Heart left ventricle (tissue), 16 donors: ENCODE measurements at regions of chr16 and their contacts with region 1.

Region 1: DNA sequence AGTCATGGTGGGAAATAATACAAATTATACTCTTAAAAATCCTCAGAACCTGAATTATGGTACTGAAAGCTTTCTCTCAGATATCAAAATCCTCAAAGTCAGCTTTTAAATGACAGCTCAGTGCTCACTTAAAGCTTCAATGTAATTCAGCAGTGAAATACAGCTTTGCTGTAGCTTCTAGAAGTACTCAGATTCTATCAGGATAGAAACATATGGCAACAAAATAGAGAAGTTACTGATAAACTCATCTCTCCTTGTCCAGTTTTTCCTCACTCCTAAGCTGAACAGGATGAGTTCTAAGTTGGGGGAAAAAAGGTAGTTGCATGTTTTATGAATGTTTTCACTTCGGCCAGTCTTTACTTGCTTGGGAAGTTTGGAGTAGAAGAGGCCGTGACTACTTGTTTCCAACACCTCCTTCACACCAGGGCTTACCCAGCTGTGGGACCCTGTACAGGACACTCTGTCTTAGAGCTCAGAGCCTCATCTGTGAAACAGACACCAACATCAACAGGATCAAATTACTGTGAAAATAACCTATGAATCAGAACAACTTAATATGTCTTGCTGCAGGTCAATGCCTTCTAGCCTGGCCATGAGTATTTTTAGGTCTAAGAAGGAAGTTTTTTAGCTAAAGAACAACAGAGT is 30.2 kb downstream of the OGFOD1 start:
- DNase-seq: no peak
- ATAC-seq: no peak
- H3K4me3 ChIP-seq: no peak overlapping the region
- H3K27ac ChIP-seq: no peak overlapping the region
- H3K4me1 ChIP-seq: peaks cover 0 to 6% (median 0%) of the 10 kb centered on the region in 12 donors
- H3K27me3 ChIP-seq: no peaks in the 10 kb centered on the region
- CTCF ChIP-seq: no peak
- POLR2A ChIP-seq: no peak

Region 2: GRCh38 chr16:56425439-56425832 is 56.2 kb before region 1 on chr16 and contains the start of gene AMFR:
- intact Hi-C with region 1: loop called in 1 of 10 experiments (anchors 10 kb)
- DNase-seq: peak; percentile 73 to 87 (median 78)
- ATAC-seq: peak; percentile 88 to 96 (median 95)
- H3K4me3 ChIP-seq: peak within 1 kb of the TSS; percentile 62 to 98 (median 90)
- H3K27ac ChIP-seq: peak within 1 kb of the TSS; percentile 65 to 95 (median 88)
- H3K4me1 ChIP-seq: peaks cover 0 to 42% (median 20%) of the 10 kb centered on the region in 12 donors
- H3K27me3 ChIP-seq: no peaks in the 10 kb centered on the region
- CTCF ChIP-seq: peak in 11 of 12 donors; percentile 33 to 74 (median 59)
- POLR2A ChIP-seq: no peak
- total RNA-seq, gene AMFR: 57.1 to 146 (median 84.8) TPM

Region 3: DNA sequence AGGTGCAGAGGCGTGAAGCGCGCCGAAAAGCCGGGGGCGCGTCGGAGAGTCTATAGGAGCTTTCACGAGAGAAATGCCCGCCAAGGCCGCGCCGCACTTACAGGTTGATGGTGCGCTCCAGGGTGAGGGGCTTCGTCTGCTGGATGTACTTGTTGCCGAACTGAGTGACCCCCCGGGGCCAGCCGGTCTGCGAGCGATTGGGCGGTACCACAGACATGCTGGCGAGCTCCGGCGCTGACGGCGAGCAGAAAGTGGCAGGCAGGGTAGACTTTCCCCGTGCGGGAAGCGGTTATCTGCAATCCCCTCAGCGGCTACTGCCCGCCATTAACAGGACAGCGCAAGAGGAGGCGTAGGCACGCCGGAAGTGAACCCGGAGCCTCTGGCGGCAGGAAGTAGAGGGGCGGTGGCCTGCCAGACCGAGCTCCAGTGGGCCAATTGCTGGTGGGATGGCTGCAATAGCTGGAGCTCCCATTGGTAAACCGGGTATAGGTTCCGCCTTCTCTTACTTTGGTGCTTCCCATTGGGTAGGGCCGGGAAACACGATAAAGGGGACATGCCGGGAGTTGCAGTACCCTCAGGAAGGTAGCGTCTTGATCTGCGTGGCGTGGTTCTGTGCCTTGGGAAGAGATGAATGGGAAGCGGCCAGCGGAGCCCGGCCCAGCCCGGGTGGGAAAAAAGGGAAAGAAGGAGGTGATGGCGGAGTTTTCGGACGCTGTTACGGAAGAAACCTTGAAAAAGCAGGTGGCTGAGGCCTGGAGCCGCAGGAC is 30.4 kb before region 1 on chr16 and contains the starts of genes NUDT21 and OGFOD1:
- intact Hi-C with region 1: no loop called
- DNase-seq: peak; percentile 95 to 97 (median 96)
- ATAC-seq: peak; percentile 99
- H3K4me3 ChIP-seq: peak within 1 kb of the TSS; percentile 65 to 98 (median 88)
- H3K27ac ChIP-seq: peak within 1 kb of the TSS; percentile 39 to 90 (median 86)
- H3K4me1 ChIP-seq: peaks cover 0 to 48% (median 36%) of the 10 kb centered on the region in 12 donors
- H3K27me3 ChIP-seq: no peaks in the 10 kb centered on the region
- CTCF ChIP-seq: peak in 3 of 12 donors; percentile 3 to 17 (median 9)
- POLR2A ChIP-seq: peak in 1 of 2 donors; percentile 67
- total RNA-seq, gene NUDT21: 35.2 to 74.3 (median 65.9) TPM
- total RNA-seq, gene OGFOD1: 20.8 to 39.1 (median 31.9) TPM